ENCODE measurements at regions of chr3 and their contacts with region 1.

Region 1: GRCh38 chr3:184338463-184338945 is 1.1 kb downstream of the FAM131A start:
- DNase-seq: peak in 1 of 2 donors; percentile 71
- H3K4me3 ChIP-seq: peak overlapping the region in 2 of 3 donors; percentile 83 to 84
- H3K27ac ChIP-seq: peak overlapping the region; percentile 98
- H3K4me1 ChIP-seq: peaks cover 8 to 11% of the 10 kb centered on the region in 2 donors
- H3K27me3 ChIP-seq: no peaks in the 10 kb centered on the region
- CTCF ChIP-seq: peak in 2 of 3 donors; percentile 9 to 11
- POLR2A ChIP-seq: no peak

Region 2: GRCh38 chr3:184314363-184314699 is 24.2 kb before region 1 on chr3 and contains the start of gene EIF4G1:
- intact Hi-C with region 1: no loop called
- DNase-seq: peak; percentile 93 to 94
- H3K4me3 ChIP-seq: peak within 1 kb of the TSS; percentile 63 to 86 (median 64)
- H3K27ac ChIP-seq: peak within 1 kb of the TSS; percentile 95 to 99
- H3K4me1 ChIP-seq: peaks cover 5 to 31% of the 10 kb centered on the region in 2 donors
- H3K27me3 ChIP-seq: no peaks in the 10 kb centered on the region
- CTCF ChIP-seq: no peak
- POLR2A ChIP-seq: peak; percentile 52
- total RNA-seq, gene EIF4G1: 168 to 202 (median 196) TPM

Region 3: DNA sequence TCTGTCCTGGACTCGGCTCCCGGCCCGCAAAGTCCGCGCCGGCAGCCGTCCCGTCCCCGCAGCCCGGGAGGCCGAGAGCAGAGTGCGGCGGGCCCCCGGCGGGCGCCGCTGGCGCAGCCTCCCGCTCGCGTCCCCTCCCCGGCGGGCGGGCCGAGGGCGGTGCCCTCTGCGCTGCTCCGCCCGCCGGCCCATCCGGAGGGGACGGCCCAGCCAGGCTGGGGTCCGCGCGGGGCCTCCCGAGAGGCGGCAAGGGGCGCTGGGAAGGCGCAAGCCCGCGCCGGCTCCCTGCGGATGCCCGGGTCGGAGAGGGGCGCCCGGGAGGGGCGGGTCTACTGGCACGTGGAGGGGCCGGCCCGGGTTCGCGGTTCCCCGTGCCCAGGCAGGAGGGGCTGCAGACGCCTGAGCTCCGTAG is 23.0 kb after region 1 on chr3 and contains the starts of genes CLCN2 and POLR2H:
- intact Hi-C with region 1: loop called (anchors 1 kb)
- DNase-seq: no peak
- H3K4me3 ChIP-seq: peak within 1 kb of the TSS; percentile 70 to 98 (median 88)
- H3K27ac ChIP-seq: peak within 1 kb of the TSS; percentile 99 to 100
- H3K4me1 ChIP-seq: peaks cover 0 to 10% of the 10 kb centered on the region in 2 donors
- H3K27me3 ChIP-seq: no peaks in the 10 kb centered on the region
- CTCF ChIP-seq: no peak
- POLR2A ChIP-seq: peak; percentile 5
- total RNA-seq, gene CLCN2: 2.1 to 4.2 (median 2.6) TPM
- total RNA-seq, gene POLR2H: 63.7 to 101 (median 99.5) TPM

Region 4: GRCh38 chr3:184391266-184391665 is 52.8 kb after region 1 on chr3:
- intact Hi-C with region 1: no loop called
- DNase-seq: no peak
- H3K4me3 ChIP-seq: no peak overlapping the region
- H3K27ac ChIP-seq: peak overlapping the region in 1 of 2 donors; percentile 74
- H3K4me1 ChIP-seq: no peaks in the 10 kb centered on the region
- H3K27me3 ChIP-seq: no peaks in the 10 kb centered on the region
- CTCF ChIP-seq: no peak
- POLR2A ChIP-seq: no peak

Measured in breast epithelium (tissue), 4 donors.